OCI-LY7 (cell line): ENCODE measurements at regions of chr10 and their contacts with region 1.

Region 1: DNA sequence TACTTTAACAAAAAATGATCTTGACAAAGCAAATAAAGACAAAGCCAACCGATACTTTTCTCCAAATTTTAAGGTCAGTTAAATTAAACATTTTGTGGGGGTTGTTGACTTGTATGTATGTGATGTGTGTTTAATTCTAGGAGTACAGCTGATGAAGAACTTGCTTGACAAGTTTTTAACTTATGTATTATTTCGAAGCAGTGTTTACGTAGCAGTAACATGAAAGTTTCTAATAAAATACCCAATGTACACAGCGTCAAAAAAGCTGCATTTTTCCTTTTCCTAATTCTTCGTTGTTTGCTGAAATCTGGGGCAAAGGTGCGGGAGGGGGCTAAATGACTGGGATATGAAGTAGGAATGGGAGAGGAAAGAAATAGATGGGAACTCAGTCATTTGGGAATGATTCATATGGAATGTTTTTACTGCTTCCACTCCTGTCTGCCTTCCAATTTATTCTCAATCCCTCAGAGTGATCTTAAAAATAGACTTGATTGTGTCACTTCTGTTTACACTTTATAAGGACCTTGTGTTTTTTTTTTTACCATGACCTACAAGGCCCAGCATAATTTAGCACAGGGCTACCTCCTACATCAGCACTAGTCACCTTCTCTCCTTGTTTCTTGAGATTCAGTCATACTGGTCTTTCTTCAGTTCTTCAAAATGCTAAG is 97.8 kb downstream of the PTEN start:
- DNase-seq: no peak
- H3K4me3 ChIP-seq: no peak overlapping the region
- H3K27ac ChIP-seq: no peak overlapping the region
- H3K4me1 ChIP-seq: no peaks in the 10 kb centered on the region
- CTCF ChIP-seq: no peak

Region 2: GRCh38 chr10:87750001-87750671 is 211.0 kb before region 1 on chr10:
- CTCF ChIA-PET with region 1: no interaction called
- POLR2A ChIA-PET with region 1: no interaction called
- intact Hi-C with region 1: no loop called
- DNase-seq: no peak
- H3K4me3 ChIP-seq: no peak overlapping the region
- H3K27ac ChIP-seq: no peak overlapping the region
- H3K4me1 ChIP-seq: no peaks in the 10 kb centered on the region
- CTCF ChIP-seq: no peak

Region 3: DNA sequence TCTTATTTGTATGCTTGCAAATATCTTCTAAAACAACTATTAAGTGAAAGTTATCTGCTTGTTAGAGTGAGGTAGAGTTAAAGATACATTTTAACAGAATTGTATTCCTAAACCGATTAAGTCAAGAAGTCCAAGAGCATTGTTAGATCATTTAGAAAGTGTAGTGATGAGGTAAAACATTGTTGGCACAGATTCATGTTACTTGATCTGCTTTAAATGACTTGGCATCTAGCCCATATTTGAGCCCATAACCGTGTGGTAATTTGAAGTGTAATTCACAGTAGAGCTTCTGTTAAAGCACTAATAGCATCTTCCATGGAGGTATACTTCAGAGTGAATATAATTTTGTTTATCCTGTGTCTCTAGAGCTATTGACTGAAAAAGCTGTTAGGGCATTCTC is 35.6 kb before region 1 on chr10:
- CTCF ChIA-PET with region 1: no interaction called
- POLR2A ChIA-PET with region 1: interaction called, 12 read pairs
- intact Hi-C with region 1: no loop called
- DNase-seq: no peak
- H3K4me3 ChIP-seq: no peak overlapping the region
- H3K27ac ChIP-seq: no peak overlapping the region
- H3K4me1 ChIP-seq: peaks cover 46% of the 10 kb centered on the region
- CTCF ChIP-seq: no peak

Region 4: GRCh38 chr10:88456730-88457129 is 495.6 kb after region 1 on chr10:
- CTCF ChIA-PET with region 1: no interaction called
- POLR2A ChIA-PET with region 1: no interaction called
- intact Hi-C with region 1: no loop called
- DNase-seq: no peak
- H3K4me3 ChIP-seq: no peak overlapping the region
- H3K27ac ChIP-seq: no peak overlapping the region
- H3K4me1 ChIP-seq: no peaks in the 10 kb centered on the region
- CTCF ChIP-seq: no peak

Region 5: GRCh38 chr10:89853781-89854191 is 1892.6 kb after region 1 on chr10:
- CTCF ChIA-PET with region 1: no interaction called
- POLR2A ChIA-PET with region 1: no interaction called
- intact Hi-C with region 1: no loop called
- DNase-seq: no peak
- H3K4me3 ChIP-seq: no peak overlapping the region
- H3K27ac ChIP-seq: no peak overlapping the region
- H3K4me1 ChIP-seq: no peaks in the 10 kb centered on the region
- CTCF ChIP-seq: 0 out of 2 replicates have a peak, but pooled peaks have one; percentile 32